Spleen (tissue), 13 donors: ENCODE measurements at regions of chr7 and their contacts with region 1.

Region 1: GRCh38 chr7:105014693-105015389 is 836 bp downstream of the KMT2E start:
- DNase-seq: peak; percentile 84
- H3K4me3 ChIP-seq: peak overlapping the region; percentile 58 to 88 (median 74)
- H3K27ac ChIP-seq: peak overlapping the region; percentile 100
- H3K4me1 ChIP-seq: peaks cover 40 to 64% (median 51%) of the 10 kb centered on the region in 6 donors
- H3K27me3 ChIP-seq: no peaks in the 10 kb centered on the region
- CTCF ChIP-seq: peak in 1 of 11 experiments; percentile 19
- POLR2A ChIP-seq: peak in 1 of 3 donors; percentile 36

Region 2: DNA sequence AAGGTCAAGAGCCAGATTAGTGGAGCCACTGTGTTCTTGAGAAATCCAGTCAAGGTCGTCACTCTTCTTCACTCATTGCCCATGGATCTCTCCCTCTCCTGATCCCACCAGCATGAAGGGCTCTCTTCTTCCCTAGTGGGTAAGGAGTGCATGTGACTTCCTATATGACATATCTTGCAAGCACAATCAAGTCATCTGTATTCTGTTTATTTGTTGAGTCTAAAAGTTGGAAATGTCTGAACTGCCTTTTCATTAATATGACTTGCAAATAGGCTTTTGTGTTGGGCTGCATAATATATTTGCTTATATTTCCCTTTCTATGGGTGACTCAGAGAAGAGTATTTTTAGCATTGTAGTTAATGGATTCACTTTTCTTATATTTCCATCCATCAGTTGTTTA is 314.5 kb before region 1 on chr7:
- intact Hi-C with region 1: no loop called
- DNase-seq: no peak
- H3K4me3 ChIP-seq: no peak overlapping the region
- H3K27ac ChIP-seq: no peak overlapping the region
- H3K4me1 ChIP-seq: no peaks in the 10 kb centered on the region
- H3K27me3 ChIP-seq: no peaks in the 10 kb centered on the region
- CTCF ChIP-seq: no peak
- POLR2A ChIP-seq: no peak

Region 3: DNA sequence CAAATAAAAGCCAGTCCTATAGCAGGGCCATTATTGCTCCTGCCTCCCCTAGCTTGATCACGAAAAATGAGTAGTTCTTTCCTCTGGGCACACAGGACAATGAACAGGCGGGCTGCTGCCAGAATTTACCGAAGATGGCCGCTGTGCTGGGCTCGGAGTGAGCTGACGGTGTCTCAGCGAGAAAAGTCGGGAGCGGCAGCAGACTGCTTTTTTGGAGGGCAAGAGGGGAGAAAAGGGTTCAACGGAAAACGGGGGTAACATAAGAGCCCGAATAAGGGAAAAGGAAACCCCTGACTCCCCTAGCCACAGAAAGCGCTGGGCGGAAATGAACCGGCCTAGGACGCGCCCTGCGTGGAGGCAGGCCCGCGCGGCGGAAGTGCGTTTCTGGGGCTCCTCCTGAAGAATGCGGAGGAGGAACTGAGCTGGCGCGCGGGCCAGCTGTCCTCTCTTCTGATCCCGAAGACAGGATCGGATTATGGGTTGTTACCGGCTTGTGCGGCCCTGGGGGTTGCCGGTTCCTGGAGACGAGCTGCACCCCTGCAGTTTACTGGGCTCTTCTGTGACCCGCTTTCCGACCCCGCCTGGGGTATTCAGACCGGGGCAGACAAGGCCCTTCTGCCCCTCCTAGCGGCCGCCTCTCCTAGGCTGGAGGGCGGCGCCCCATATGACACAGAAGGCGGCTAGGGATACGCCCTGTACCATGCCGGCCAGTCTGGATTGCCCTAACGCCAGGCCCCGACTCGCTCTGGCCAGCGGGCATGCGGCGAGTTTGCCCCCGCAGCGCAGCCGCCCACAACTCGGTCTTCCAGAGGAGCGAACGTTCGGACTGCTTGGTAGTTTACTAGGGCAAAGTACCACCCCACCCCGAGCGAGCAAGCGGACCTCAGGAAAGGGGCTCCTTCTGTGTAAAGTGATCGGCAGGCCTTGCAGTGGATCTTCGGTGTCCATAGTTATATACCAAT is 31.0 kb before region 1 on chr7:
- intact Hi-C with region 1: loop called (anchors 5 kb)
- DNase-seq: peak; percentile 98
- H3K4me3 ChIP-seq: peak overlapping the region; percentile 47 to 75 (median 53)
- H3K27ac ChIP-seq: peak overlapping the region; percentile 93 to 98 (median 96)
- H3K4me1 ChIP-seq: peaks cover 39 to 76% (median 56%) of the 10 kb centered on the region in 6 donors
- H3K27me3 ChIP-seq: no peaks in the 10 kb centered on the region
- CTCF ChIP-seq: peak; percentile 38 to 83 (median 68)
- POLR2A ChIP-seq: peak in 1 of 3 donors; percentile 71